WTC11 (cell line): ENCODE measurements at regions of chr3 and their contacts with region 1.

Region 1: GRCh38 chr3:48240711-48241491 is at the start of gene ZNF589:
- DNase-seq: peak; percentile 95
- ATAC-seq: peak; percentile 87
- H3K4me3 Mint-ChIP-seq: peak within 1 kb of the TSS; percentile 86
- H3K27ac Mint-ChIP-seq: peak within 1 kb of the TSS; percentile 90
- H3K4me1 Mint-ChIP-seq: peaks cover 41% of the 10 kb centered on the region
- H3K27me3 Mint-ChIP-seq: no peaks in the 10 kb centered on the region
- CTCF ChIP-seq: no peak
- total RNA-seq, gene ZNF589: 96.1 to 104 TPM (median 102 TPM) in 3 replicates

Region 2: GRCh38 chr3:48188266-48189201 is 52.4 kb before region 1 on chr3 and contains the start of gene CDC25A:
- CTCF ChIA-PET with region 1: interaction called, 18 read pairs
- POLR2A ChIA-PET with region 1: interaction called, 12 read pairs
- DNase-seq: peak; percentile 98
- ATAC-seq: peak; percentile 96
- H3K4me3 Mint-ChIP-seq: peak within 1 kb of the TSS; percentile 96
- H3K27ac Mint-ChIP-seq: peak within 1 kb of the TSS; percentile 63
- H3K4me1 Mint-ChIP-seq: peaks cover 38% of the 10 kb centered on the region
- H3K27me3 Mint-ChIP-seq: no peaks in the 10 kb centered on the region
- CTCF ChIP-seq: no peak
- total RNA-seq, gene CDC25A: 52.4 to 57.6 TPM (median 54.7 TPM) in 3 replicates